Prostate gland (tissue), 2 donors: ENCODE measurements at regions of chr19 and their contacts with region 1.

Region 1: GRCh38 chr19:47719047-47719859 is 6.0 kb downstream of the EHD2 start:
- DNase-seq: peak; percentile 76
- H3K4me3 ChIP-seq: peak overlapping the region; percentile 2 to 6
- H3K27ac ChIP-seq: peak overlapping the region; percentile 86 to 90
- H3K4me1 ChIP-seq: no peaks in the 10 kb centered on the region
- H3K27me3 ChIP-seq: no peaks in the 10 kb centered on the region
- CTCF ChIP-seq: no peak
- POLR2A ChIP-seq: peak; percentile 51

Region 2: DNA sequence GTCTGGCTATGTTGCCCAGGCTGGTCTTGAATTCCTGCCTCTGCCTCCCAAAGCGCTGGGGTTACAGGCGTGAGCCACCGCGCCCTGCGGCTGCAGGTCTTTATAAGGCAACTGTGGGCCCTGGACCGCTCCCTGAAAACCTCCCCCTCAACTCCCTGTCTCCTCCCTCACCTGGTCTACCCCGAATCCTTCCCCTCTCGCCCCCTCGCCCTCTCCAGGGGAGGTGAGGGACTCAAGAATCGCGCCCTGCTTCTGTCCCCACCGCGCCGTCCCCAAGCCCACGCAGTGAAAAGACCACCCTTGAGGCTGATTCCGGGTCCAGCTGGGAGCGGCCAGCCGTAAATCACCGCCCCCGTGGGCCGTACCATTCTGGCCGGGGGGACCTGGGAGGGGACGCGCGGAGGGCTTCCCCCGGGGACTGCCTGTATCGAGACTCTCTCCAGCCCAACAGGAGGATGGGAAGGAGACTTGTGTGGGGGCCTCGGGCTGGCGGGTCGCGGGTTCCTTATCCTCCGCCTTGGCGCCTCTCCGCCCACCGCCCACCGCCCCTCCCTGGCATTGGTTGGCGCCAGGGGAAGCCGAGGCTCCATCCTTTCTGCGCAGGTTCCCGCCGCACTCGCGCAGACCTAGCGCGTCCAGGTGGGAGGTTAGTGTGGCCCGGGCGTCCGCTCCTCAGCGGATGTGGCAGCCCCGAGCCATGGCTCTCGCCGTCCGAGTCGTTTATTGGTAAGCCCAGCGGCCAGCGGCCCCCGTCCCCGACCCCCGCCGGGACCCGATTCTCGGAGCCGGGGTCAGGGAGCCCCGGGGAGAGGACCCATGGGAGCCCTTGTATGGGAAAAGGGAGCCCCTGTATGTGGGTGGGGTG is 59.1 kb after region 1 on chr19 and contains the start of gene SELENOW:
- intact Hi-C with region 1: loop called (anchors 5 kb)
- DNase-seq: peak; percentile 70
- H3K4me3 ChIP-seq: peak within 1 kb of the TSS; percentile 89 to 94
- H3K27ac ChIP-seq: peak within 1 kb of the TSS; percentile 95 to 99
- H3K4me1 ChIP-seq: peaks cover 9% of the 10 kb centered on the region
- H3K27me3 ChIP-seq: no peaks in the 10 kb centered on the region
- CTCF ChIP-seq: peak in 1 of 4 experiments; percentile 10
- POLR2A ChIP-seq: peak; percentile 95
- total RNA-seq, gene SELENOW: 301 to 565 TPM